Caco-2 (cell line): ENCODE measurements at regions of chr2 and their contacts with region 1.

Region 1: DNA sequence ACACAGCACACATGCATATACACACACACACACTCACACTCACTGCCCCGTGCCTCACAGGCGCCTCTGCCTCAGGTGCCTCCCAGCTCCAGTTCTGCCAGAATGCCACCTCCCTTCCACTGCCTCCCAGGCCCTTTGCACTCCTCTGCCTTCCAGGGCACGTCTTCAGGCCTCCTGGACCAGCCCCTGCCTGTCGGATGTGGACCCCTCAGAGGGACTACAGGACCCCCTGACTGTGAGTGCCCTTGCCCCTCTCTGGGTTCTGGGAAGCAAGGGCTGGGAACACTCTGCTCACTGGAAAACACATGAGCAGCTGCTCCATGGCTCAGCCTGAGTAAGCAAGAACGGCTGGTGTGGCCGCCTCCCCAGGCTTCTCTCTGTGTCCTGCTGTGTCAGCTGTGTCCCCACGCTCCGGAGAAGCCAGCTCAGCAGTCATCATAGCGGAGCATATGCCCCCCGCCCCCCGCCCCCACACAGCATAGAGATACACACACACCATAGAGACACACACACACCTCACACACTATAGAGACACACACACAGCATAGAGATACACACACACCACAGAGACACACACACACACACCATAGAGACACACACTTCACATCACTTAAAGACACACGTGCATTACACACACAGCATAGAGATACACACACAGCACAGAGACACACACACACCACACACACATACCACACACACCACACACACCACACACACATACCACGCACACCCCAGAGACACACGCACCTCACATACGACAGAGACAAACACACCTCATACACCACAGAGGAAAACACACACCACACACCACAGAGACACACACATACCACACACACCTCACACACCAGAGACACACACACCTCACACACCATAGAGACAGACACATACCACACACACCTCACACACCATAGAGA is 271.3 kb downstream of the CYRIA start:
- DNase-seq: peak; percentile 65 to 74
- H3K4me3 ChIP-seq: no peak overlapping the region
- H3K4me3 Mint-ChIP-seq: no peak overlapping the region
- H3K27ac Mint-ChIP-seq: no peak overlapping the region
- H3K4me1 ChIP-seq: peaks cover 60% of the 10 kb centered on the region
- H3K4me1 Mint-ChIP-seq: peaks cover 13% of the 10 kb centered on the region
- H3K27me3 ChIP-seq: no peaks in the 10 kb centered on the region
- H3K27me3 Mint-ChIP-seq: no peaks in the 10 kb centered on the region
- CTCF ChIP-seq: no peak

Region 2: GRCh38 chr2:15769676-15770547 is 624.4 kb before region 1 on chr2:
- CTCF ChIA-PET with region 1: no interaction called
- POLR2A ChIA-PET with region 1: no interaction called
- intact Hi-C with region 1: loop called (anchors 5 kb)
- DNase-seq: no peak
- H3K4me3 ChIP-seq: no peak overlapping the region
- H3K4me3 Mint-ChIP-seq: no peak overlapping the region
- H3K27ac Mint-ChIP-seq: peak overlapping the region; percentile 53
- H3K4me1 ChIP-seq: peaks cover 44% of the 10 kb centered on the region
- H3K4me1 Mint-ChIP-seq: peaks cover 53% of the 10 kb centered on the region
- H3K27me3 ChIP-seq: no peaks in the 10 kb centered on the region
- H3K27me3 Mint-ChIP-seq: no peaks in the 10 kb centered on the region
- CTCF ChIP-seq: no peak

Region 3: DNA sequence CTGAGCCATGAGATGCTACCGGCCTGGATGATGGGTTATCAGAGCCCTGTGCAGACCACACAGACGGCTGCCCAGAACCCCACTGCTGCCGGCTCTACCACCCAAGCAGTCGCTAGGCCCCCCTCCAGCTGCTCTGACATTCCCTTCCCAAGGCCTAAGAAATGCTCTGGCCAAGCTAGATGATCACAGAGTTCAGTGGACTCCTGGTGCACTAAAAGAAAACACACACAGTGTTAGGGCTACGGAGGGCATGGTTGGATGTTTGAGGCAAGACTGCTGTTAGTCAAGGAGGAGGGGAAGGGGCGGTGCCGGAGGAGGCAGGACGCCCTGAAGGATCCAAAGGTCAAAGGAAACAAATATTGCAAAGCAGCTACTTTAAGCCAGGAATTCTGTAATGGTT is 279.5 kb before region 1 on chr2:
- CTCF ChIA-PET with region 1: no interaction called
- POLR2A ChIA-PET with region 1: no interaction called
- intact Hi-C with region 1: loop called (anchors 5 kb)
- DNase-seq: peak; percentile 83 to 88
- H3K4me3 ChIP-seq: no peak overlapping the region
- H3K4me3 Mint-ChIP-seq: no peak overlapping the region
- H3K27ac Mint-ChIP-seq: no peak overlapping the region
- H3K4me1 ChIP-seq: peaks cover 36% of the 10 kb centered on the region
- H3K4me1 Mint-ChIP-seq: peaks cover 12% of the 10 kb centered on the region
- H3K27me3 ChIP-seq: no peaks in the 10 kb centered on the region
- H3K27me3 Mint-ChIP-seq: no peaks in the 10 kb centered on the region
- CTCF ChIP-seq: no peak

Region 4: GRCh38 chr2:16325016-16325975 is 69.0 kb before region 1 on chr2:
- CTCF ChIA-PET with region 1: interaction called, 3 read pairs
- POLR2A ChIA-PET with region 1: interaction called, 7 read pairs
- intact Hi-C with region 1: loop called (anchors 1 kb)
- DNase-seq: peak; percentile 86 to 90
- H3K4me3 ChIP-seq: no peak overlapping the region
- H3K4me3 Mint-ChIP-seq: peak overlapping the region; percentile 1
- H3K27ac Mint-ChIP-seq: peak overlapping the region; percentile 90
- H3K4me1 ChIP-seq: peaks cover 81% of the 10 kb centered on the region
- H3K4me1 Mint-ChIP-seq: peaks cover 78% of the 10 kb centered on the region
- H3K27me3 ChIP-seq: no peaks in the 10 kb centered on the region
- H3K27me3 Mint-ChIP-seq: no peaks in the 10 kb centered on the region
- CTCF ChIP-seq: no peak

Region 5: DNA sequence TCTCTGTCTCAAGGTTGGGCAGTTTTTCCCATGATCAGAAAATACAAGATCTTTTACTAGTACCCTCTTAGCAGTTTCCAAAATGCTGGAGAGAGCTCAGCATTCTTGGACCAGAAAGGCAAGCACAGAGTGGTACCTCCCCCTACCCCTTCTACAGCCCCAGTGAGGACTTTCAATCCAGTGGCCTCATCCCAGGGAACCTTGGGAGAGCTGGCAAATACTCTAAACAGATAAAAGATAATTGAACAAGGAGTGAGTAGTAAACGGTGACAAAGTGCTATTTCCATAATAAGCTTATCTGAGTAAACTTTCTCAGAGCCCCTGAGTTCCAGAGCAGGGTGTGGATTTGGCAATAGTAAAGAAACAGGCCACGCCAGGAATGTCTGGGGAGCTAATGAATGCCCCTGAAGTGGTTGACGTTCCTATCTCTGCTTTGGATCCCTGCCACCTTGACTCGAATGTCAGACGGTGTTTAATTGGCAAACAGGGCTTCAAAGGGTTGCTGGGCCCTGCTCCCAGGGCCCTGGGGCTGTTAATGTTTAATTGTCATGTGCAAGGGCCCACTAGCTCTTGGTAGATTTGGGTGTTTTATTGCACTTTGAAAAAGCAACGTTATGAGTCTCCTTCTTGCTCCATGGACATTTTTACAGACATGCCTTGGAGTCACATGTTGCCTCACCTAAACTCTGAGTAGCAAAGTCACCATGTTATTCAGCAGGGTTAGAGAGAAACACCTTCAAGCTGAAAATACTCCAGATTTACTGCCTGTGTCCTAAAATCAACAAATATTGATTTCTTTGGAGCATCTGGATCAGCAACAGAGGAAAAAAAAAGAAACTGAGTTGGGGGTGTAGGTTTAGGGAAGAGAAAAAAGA is 31.4 kb after region 1 on chr2:
- CTCF ChIA-PET with region 1: interaction called, 20 read pairs
- POLR2A ChIA-PET with region 1: interaction called, 25 read pairs
- intact Hi-C with region 1: loop called (anchors 1 kb)
- DNase-seq: peak; percentile 97 to 99
- H3K4me3 ChIP-seq: no peak overlapping the region
- H3K4me3 Mint-ChIP-seq: peak overlapping the region; percentile 55
- H3K27ac Mint-ChIP-seq: peak overlapping the region; percentile 99
- H3K4me1 ChIP-seq: peaks cover 46% of the 10 kb centered on the region
- H3K4me1 Mint-ChIP-seq: peaks cover 58% of the 10 kb centered on the region
- H3K27me3 ChIP-seq: no peaks in the 10 kb centered on the region
- H3K27me3 Mint-ChIP-seq: no peaks in the 10 kb centered on the region
- CTCF ChIP-seq: no peak

Region 6: DNA sequence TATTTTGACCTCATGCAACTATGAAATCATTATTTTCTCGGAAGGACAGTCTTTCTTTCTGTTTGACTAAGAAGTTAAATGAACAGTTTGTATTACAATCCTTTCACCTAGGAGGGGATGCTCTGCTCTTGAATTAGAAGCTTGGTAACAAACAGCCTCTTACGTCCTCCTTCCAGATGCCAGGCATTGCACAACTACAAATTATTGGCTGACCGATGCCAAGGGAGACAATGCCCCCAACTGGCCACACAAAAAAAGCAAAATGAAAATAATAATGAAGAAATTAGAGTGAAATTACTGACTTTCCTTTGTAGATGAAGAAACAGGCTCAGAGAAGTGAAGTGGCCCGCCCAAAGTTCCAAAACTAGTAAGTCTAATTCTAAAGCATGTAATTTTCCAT is 93.4 kb after region 1 on chr2:
- CTCF ChIA-PET with region 1: no interaction called
- POLR2A ChIA-PET with region 1: no interaction called
- intact Hi-C with region 1: loop called (anchors 1 kb)
- DNase-seq: peak; percentile 42 to 50
- H3K4me3 ChIP-seq: no peak overlapping the region
- H3K4me3 Mint-ChIP-seq: no peak overlapping the region
- H3K27ac Mint-ChIP-seq: peak overlapping the region; percentile 31
- H3K4me1 ChIP-seq: no peaks in the 10 kb centered on the region
- H3K4me1 Mint-ChIP-seq: peaks cover 16% of the 10 kb centered on the region
- H3K27me3 ChIP-seq: no peaks in the 10 kb centered on the region
- H3K27me3 Mint-ChIP-seq: no peaks in the 10 kb centered on the region
- CTCF ChIP-seq: peak; percentile 34 to 59